Panc1 (cell line): ENCODE measurements at regions of chr4 and their contacts with region 1.

Region 1: GRCh38 chr4:154743683-154744340 is at the start of gene LRAT:
- DNase-seq: no peak
- ATAC-seq: peak; percentile 86
- H3K4me3 ChIP-seq: peak within 1 kb of the TSS; percentile 24 to 48
- H3K27ac ChIP-seq: no peak within 1 kb of the TSS
- H3K4me1 ChIP-seq: no peaks in the 10 kb centered on the region
- H3K27me3 ChIP-seq: peaks cover 6% of the 10 kb centered on the region; the same call in 1 of the 2 replicates
- CTCF ChIP-seq: no peak
- total RNA-seq, gene LRAT: not detected

Region 2: GRCh38 chr4:154529728-154530519 is 213.9 kb before region 1 on chr4:
- CTCF ChIA-PET with region 1: interaction called, 13 read pairs
- POLR2A ChIA-PET with region 1: no interaction called
- in situ Hi-C with region 1: no loop called
- intact Hi-C with region 1: no loop called
- DNase-seq: no peak
- ATAC-seq: no peak
- H3K4me3 ChIP-seq: no peak overlapping the region
- H3K27ac ChIP-seq: no peak overlapping the region
- H3K4me1 ChIP-seq: no peaks in the 10 kb centered on the region
- H3K27me3 ChIP-seq: no peaks in the 10 kb centered on the region
- CTCF ChIP-seq: no peak

Region 3: GRCh38 chr4:154686838-154687237 is 57.0 kb before region 1 on chr4:
- CTCF ChIA-PET with region 1: no interaction called
- POLR2A ChIA-PET with region 1: no interaction called
- in situ Hi-C with region 1: no loop called
- intact Hi-C with region 1: no loop called
- DNase-seq: no peak
- ATAC-seq: no peak
- H3K4me3 ChIP-seq: no peak overlapping the region
- H3K27ac ChIP-seq: no peak overlapping the region
- H3K4me1 ChIP-seq: no peaks in the 10 kb centered on the region
- H3K27me3 ChIP-seq: no peaks in the 10 kb centered on the region
- CTCF ChIP-seq: no peak; the same call in 1 of the 2 replicates